ENCODE measurements at regions of chr7 and their contacts with region 1.

Region 1: GRCh38 chr7:5320802-5321396 is 38.2 kb downstream of the SLC29A4 start:
- DNase-seq: no peak
- H3K4me3 ChIP-seq: no peak overlapping the region
- H3K27ac ChIP-seq: no peak overlapping the region
- H3K4me1 ChIP-seq: no peaks in the 10 kb centered on the region
- H3K27me3 ChIP-seq: no peaks in the 10 kb centered on the region
- CTCF ChIP-seq: no peak
- POLR2A ChIP-seq: no peak

Region 2: GRCh38 chr7:5302577-5302976 is 18.3 kb before region 1 on chr7:
- CTCF ChIA-PET with region 1: no interaction called
- POLR2A ChIA-PET with region 1: interaction called, 10 read pairs
- dilution Hi-C with region 1: no loop called
- intact Hi-C with region 1: no loop called
- DNase-seq: no peak
- H3K4me3 ChIP-seq: no peak overlapping the region
- H3K27ac ChIP-seq: no peak overlapping the region
- H3K4me1 ChIP-seq: no peaks in the 10 kb centered on the region
- H3K27me3 ChIP-seq: no peaks in the 10 kb centered on the region
- CTCF ChIP-seq: no peak
- POLR2A ChIP-seq: no peak